ENCODE measurements at regions of chr9 and their contacts with region 1.

Region 1: GRCh38 chr9:77789891-77790290 is 141.8 kb upstream of the GNA14 start:
- DNase-seq: no peak
- ATAC-seq: no peak
- H3K4me3 ChIP-seq: no peak overlapping the region
- H3K27ac ChIP-seq: no peak overlapping the region
- H3K4me1 ChIP-seq: no peaks in the 10 kb centered on the region
- H3K27me3 ChIP-seq: no peaks in the 10 kb centered on the region

Region 2: GRCh38 chr9:77819657-77820056 is 29.8 kb after region 1 on chr9:
- intact Hi-C with region 1: loop called in 1 of 4 experiments (anchors 2 kb)
- DNase-seq: no peak
- ATAC-seq: peak; percentile 64 to 86
- H3K4me3 ChIP-seq: no peak overlapping the region
- H3K27ac ChIP-seq: peak overlapping the region; percentile 43
- H3K4me1 ChIP-seq: no peaks in the 10 kb centered on the region
- H3K27me3 ChIP-seq: no peaks in the 10 kb centered on the region

Region 3: GRCh38 chr9:77841739-77842386 is 52.0 kb after region 1 on chr9:
- intact Hi-C with region 1: no loop called
- DNase-seq: no peak
- ATAC-seq: no peak
- H3K4me3 ChIP-seq: no peak overlapping the region
- H3K27ac ChIP-seq: no peak overlapping the region
- H3K4me1 ChIP-seq: peaks cover 8% of the 10 kb centered on the region
- H3K27me3 ChIP-seq: no peaks in the 10 kb centered on the region

Measured in right cardiac atrium (tissue), 5 donors.